Uterus (tissue), 4 donors: ENCODE measurements at regions of chr2 and their contacts with region 1.

Region 1: GRCh38 chr2:230828272-230828961 is 36.3 kb upstream of the ITM2C start:
- DNase-seq: no peak
- H3K4me3 ChIP-seq: no peak overlapping the region
- H3K27ac ChIP-seq: no peak overlapping the region
- H3K4me1 ChIP-seq: peaks cover 0 to 4% of the 10 kb centered on the region in 2 donors
- H3K27me3 ChIP-seq: peaks cover 5 to 7% of the 10 kb centered on the region in 2 donors
- CTCF ChIP-seq: no peak
- POLR2A ChIP-seq: no peak

Region 2: GRCh38 chr2:230537531-230537976 is 290.9 kb before region 1 on chr2:
- intact Hi-C with region 1: no loop called
- DNase-seq: no peak
- H3K4me3 ChIP-seq: no peak overlapping the region
- H3K27ac ChIP-seq: no peak overlapping the region
- H3K4me1 ChIP-seq: no peaks in the 10 kb centered on the region
- H3K27me3 ChIP-seq: no peaks in the 10 kb centered on the region
- CTCF ChIP-seq: no peak
- POLR2A ChIP-seq: no peak

Region 3: GRCh38 chr2:230987137-230988020 is 159.0 kb after region 1 on chr2:
- intact Hi-C with region 1: loop called (anchors 5 kb)
- DNase-seq: peak; percentile 63 to 80
- H3K4me3 ChIP-seq: peak overlapping the region; percentile 13 to 27
- H3K27ac ChIP-seq: no peak overlapping the region
- H3K4me1 ChIP-seq: no peaks in the 10 kb centered on the region
- H3K27me3 ChIP-seq: no peaks in the 10 kb centered on the region
- CTCF ChIP-seq: peak; percentile 82 to 96 (median 88)
- POLR2A ChIP-seq: no peak